PC-3 (cell line): ENCODE measurements at regions of chr17 and their contacts with region 1.

Region 1: GRCh38 chr17:78176548-78177025 is 8.2 kb downstream of the SYNGR2 start:
- DNase-seq: peak; percentile 44
- ATAC-seq: peak; percentile 7; the same call in 1 of the 2 replicates
- H3K4me3 ChIP-seq: no peak overlapping the region
- H3K27ac ChIP-seq: no peak overlapping the region
- H3K4me1 ChIP-seq: peaks cover 12% of the 10 kb centered on the region; the same call in 1 of the 2 replicates
- H3K27me3 ChIP-seq: no peaks in the 10 kb centered on the region
- CTCF ChIP-seq: peak; percentile 83

Region 2: GRCh38 chr17:78058001-78058400 is 118.6 kb before region 1 on chr17:
- CTCF ChIA-PET with region 1: no interaction called
- POLR2A ChIA-PET with region 1: no interaction called
- intact Hi-C with region 1: no loop called
- DNase-seq: no peak
- ATAC-seq: no peak
- H3K4me3 ChIP-seq: no peak overlapping the region
- H3K27ac ChIP-seq: no peak overlapping the region
- H3K4me1 ChIP-seq: peaks cover 22% of the 10 kb centered on the region
- H3K27me3 ChIP-seq: no peaks in the 10 kb centered on the region
- CTCF ChIP-seq: no peak

Region 3: DNA sequence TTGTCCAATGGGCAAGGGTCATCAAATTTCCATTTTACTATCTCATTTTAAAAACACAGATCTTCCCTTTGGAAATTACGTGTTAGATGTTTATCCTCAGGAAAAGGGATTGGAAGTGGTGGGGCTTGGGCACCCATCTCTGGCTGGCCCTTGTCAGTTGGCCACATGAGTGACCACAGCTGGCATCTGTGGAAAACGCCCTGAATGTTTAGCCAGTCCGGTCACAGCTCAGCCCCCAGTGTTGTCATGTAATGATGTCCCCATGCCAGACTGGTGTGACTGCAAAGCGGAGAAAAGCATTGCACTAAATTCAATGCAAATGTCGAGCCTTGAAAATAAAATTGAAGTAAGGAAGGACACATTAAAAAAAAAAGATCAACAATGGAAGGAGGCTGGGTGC is 101.0 kb before region 1 on chr17:
- CTCF ChIA-PET with region 1: no interaction called
- POLR2A ChIA-PET with region 1: no interaction called
- intact Hi-C with region 1: no loop called
- DNase-seq: no peak
- ATAC-seq: no peak
- H3K4me3 ChIP-seq: no peak overlapping the region
- H3K27ac ChIP-seq: no peak overlapping the region
- H3K4me1 ChIP-seq: no peaks in the 10 kb centered on the region
- H3K27me3 ChIP-seq: no peaks in the 10 kb centered on the region
- CTCF ChIP-seq: no peak

Region 4: GRCh38 chr17:78112518-78113226 is 63.9 kb before region 1 on chr17:
- CTCF ChIA-PET with region 1: interaction called, 4 read pairs
- POLR2A ChIA-PET with region 1: no interaction called
- intact Hi-C with region 1: loop called (anchors 2 kb)
- DNase-seq: peak; percentile 81
- ATAC-seq: peak; percentile 91
- H3K4me3 ChIP-seq: no peak overlapping the region
- H3K27ac ChIP-seq: no peak overlapping the region
- H3K4me1 ChIP-seq: peaks cover 3% of the 10 kb centered on the region
- H3K27me3 ChIP-seq: no peaks in the 10 kb centered on the region
- CTCF ChIP-seq: peak; percentile 99

Region 5: DNA sequence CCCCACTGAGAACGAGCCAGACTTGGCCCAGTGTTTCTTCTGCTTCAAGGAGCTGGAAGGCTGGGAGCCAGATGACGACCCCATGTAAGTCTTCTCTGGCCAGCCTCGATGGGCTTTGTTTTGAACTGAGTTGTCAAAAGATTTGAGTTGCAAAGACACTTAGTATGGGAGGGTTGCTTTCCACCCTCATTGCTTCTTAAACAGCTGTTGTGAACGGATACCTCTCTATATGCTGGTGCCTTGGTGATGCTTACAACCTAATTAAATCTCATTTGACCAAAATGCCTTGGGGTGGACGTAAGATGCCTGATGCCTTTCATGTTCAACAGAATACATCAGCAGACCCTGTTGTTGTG is 38.1 kb after region 1 on chr17:
- CTCF ChIA-PET with region 1: no interaction called
- POLR2A ChIA-PET with region 1: no interaction called
- intact Hi-C with region 1: loop called (anchors 2 kb)
- DNase-seq: no peak
- ATAC-seq: peak; percentile 17
- H3K4me3 ChIP-seq: peak overlapping the region; percentile 100
- H3K27ac ChIP-seq: peak overlapping the region; percentile 72
- H3K4me1 ChIP-seq: peaks cover 13% of the 10 kb centered on the region
- H3K27me3 ChIP-seq: no peaks in the 10 kb centered on the region
- CTCF ChIP-seq: no peak

Region 6: GRCh38 chr17:78300962-78301822 is 124.6 kb after region 1 on chr17:
- CTCF ChIA-PET with region 1: no interaction called
- POLR2A ChIA-PET with region 1: no interaction called
- intact Hi-C with region 1: no loop called
- DNase-seq: peak; percentile 61
- ATAC-seq: peak; percentile 78
- H3K4me3 ChIP-seq: no peak overlapping the region
- H3K27ac ChIP-seq: peak overlapping the region; percentile 18
- H3K4me1 ChIP-seq: peaks cover 12% of the 10 kb centered on the region
- H3K27me3 ChIP-seq: no peaks in the 10 kb centered on the region
- CTCF ChIP-seq: no peak